ENCODE measurements at regions of chr15 and their contacts with region 1.

Region 1: DNA sequence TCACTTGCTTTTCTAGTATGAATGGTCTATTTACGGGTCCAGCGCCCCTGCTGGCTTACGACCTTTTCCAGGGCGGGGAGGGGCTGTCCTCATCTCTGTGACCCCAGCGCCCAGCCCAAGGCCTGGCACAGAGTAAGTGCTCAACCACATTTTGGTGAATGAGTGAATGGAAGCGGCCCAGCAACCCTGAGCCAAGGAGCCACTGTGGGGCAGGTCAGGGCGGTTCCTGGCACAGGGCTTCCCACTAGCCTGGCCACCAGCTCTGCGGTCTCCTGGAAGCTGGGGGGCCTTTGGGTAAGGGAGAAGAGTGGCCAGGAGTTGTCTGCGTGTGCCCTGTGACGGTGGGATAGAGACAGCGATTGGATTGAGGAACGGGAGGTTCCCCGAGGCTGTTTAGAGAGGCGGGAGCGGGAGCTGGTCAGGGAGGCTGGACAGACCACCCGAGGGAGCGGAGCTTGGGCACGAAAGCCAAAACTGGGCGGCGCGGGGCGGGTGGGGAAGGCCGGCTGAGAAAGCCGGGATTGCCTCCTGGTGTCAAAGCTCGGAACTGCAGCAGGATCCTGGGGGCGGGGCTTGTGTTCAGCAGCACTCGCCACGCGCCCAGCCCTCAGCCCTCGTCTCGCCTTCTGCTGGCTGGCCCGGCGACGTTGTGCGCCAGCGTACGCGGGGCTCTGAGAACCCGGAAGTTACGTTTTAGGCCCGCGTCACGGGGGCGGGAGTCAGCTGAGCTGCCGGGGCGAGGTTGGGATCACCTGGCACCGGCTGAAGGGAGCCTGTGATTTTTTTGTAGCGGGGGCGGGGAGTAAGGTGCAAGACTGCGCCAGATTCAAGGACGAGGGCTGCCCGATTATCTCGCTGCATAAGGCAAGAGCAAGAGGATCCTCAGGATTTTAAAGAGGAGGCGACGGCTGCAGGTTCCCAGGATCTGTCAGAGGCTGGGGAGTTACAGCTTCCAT is at the start of gene VPS18:
- DNase-seq: peak; percentile 99 to 100 (median 99)
- H3K4me3 ChIP-seq: peak within 1 kb of the TSS; percentile 65 to 100 (median 93)
- H3K27ac ChIP-seq: peak within 1 kb of the TSS; percentile 44 to 97 (median 89)
- H3K27me3 ChIP-seq: no peaks in the 10 kb centered on the region
- CTCF ChIP-seq: peak; percentile 89 to 100 (median 99)
- total RNA-seq, gene VPS18: 19.3 to 39.4 (median 29.9) TPM

Region 2: GRCh38 chr15:40513609-40514008 is 380.4 kb before region 1 on chr15:
- intact Hi-C with region 1: loop called in 1 of 2 experiments (anchors 2 kb)
- DNase-seq: no peak
- H3K4me3 ChIP-seq: no peak overlapping the region
- H3K27ac ChIP-seq: no peak overlapping the region
- H3K27me3 ChIP-seq: no peaks in the 10 kb centered on the region
- CTCF ChIP-seq: no peak

Region 3: DNA sequence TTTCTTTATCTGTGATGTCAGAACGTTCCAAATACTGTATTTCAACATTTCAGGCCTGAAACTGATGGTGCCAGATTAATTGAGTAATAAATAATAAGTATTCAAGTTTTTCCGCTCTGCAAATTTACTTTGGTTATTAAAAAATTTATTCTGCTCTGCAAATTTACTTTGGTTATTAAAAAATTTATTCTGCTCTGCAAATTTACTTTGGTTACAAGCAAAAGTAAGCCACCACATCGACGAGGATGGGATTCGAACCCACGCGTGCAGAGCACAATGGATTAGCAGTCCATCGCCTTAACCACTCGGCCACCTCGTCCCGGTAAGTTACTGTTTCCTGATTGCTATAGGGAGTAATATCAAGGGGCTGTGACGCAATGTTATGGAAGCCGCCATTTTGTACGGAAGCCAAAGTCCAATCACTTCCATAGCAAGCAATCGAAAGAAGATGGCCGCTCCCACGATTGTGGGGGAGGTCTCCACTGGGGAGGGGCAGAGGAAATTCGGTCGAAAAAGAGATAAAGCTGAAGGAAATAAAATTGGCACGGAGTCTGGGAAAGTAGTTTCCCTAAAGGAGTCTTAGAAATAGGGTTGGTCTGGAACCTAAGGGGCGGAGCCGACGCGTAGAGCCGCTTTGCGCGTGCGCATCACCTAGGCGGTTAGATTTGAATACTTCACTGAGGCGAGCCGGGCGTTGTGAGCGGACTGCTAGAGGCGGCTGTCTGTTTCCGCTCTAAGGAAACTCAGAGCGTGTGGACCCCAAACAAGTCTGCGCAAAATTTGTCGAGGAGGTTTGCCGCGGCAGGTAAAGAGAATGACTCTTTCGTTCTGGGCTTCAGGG is 300.2 kb before region 1 on chr15 and contains the start of gene KNL1:
- intact Hi-C with region 1: loop called in 1 of 2 experiments (anchors 2 kb)
- DNase-seq: peak; percentile 88 to 97 (median 92)
- H3K4me3 ChIP-seq: peak within 1 kb of the TSS; percentile 50 to 89 (median 72)
- H3K27ac ChIP-seq: peak within 1 kb of the TSS; percentile 70 to 99 (median 95)
- H3K27me3 ChIP-seq: peaks cover 0 to 15% (median 0%) of the 10 kb centered on the region in 45 donors
- CTCF ChIP-seq: peak in 24 of 56 donors; percentile 4 to 56 (median 24)
- total RNA-seq, gene KNL1: 0.04 to 2.4 (median 0.44) TPM in 108 of 120 experiments, not detected in the others

Region 4: GRCh38 chr15:40694688-40695468 is 199.1 kb before region 1 on chr15 and contains the start of gene RAD51:
- intact Hi-C with region 1: loop called (anchors 1 to 2 kb)
- DNase-seq: peak; percentile 77 to 94 (median 92)
- H3K4me3 ChIP-seq: peak within 1 kb of the TSS; percentile 63 to 99 (median 91)
- H3K27ac ChIP-seq: peak within 1 kb of the TSS; percentile 90 to 100 (median 99)
- H3K27me3 ChIP-seq: no peaks in the 10 kb centered on the region
- CTCF ChIP-seq: peak in 11 of 56 donors; percentile 8 to 31 (median 14)
- total RNA-seq, gene RAD51: 0.23 to 3.8 (median 0.87) TPM in 85 of 120 experiments, not detected in the others

Region 5: GRCh38 chr15:40731034-40731433 is 163.0 kb before region 1 on chr15:
- intact Hi-C with region 1: no loop called
- DNase-seq: no peak
- H3K4me3 ChIP-seq: no peak overlapping the region
- H3K27ac ChIP-seq: no peak overlapping the region
- H3K27me3 ChIP-seq: no peaks in the 10 kb centered on the region
- CTCF ChIP-seq: no peak

Region 6: DNA sequence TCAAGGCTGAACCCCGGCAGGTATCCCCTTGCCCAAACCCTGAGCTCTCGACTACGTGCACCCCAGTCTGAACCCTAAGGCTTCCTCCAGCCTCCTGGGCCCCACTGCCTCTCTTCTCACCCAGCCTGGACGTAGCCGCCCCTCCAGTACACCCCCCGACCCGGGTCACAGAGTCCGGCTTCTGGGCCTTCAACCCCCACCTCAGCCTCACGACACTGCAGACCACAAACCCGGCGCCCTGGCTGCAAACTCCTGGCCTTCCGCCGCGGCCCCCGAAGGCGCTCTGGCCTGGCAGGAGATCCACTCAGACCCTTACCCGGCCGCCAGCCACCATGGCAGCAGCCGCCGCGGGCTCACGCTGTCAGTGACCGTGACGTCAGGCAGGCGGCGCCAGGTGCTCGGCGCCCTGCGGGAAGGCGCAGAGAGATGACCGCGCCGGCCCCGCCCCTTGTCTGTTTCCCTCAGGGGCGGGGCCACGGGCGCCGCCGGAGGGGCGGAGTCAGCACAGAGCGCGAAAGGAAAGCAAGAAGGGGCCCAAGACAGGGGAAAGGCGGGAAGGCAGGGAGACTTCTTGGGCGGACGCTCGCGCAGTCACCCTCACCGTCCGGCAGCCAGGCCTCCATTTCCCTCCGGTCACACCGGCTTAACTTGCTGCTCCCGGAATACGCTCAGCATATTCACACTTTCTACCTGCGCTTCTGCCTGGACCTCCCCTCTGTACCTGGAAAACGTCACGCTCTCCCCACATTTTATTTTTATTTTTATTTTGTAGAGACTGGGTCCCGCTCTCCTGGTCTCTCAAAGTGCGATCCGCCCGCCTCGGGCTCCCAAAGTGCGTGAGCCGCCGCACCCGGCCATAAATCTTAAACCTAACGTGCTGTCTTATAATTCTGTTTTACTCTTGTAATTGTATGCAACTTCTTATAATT is 138.9 kb before region 1 on chr15 and contains the start of gene RMDN3:
- intact Hi-C with region 1: loop called in 1 of 2 experiments (anchors 2 kb)
- DNase-seq: peak; percentile 84 to 96 (median 90)
- H3K4me3 ChIP-seq: peak within 1 kb of the TSS; percentile 62 to 99 (median 92)
- H3K27ac ChIP-seq: peak within 1 kb of the TSS in 57 of 59 donors; percentile 19 to 94 (median 79)
- H3K27me3 ChIP-seq: no peaks in the 10 kb centered on the region
- CTCF ChIP-seq: peak in 53 of 56 donors; percentile 14 to 70 (median 47)
- total RNA-seq, gene RMDN3: 51.4 to 80.5 (median 65.4) TPM

Region 7: DNA sequence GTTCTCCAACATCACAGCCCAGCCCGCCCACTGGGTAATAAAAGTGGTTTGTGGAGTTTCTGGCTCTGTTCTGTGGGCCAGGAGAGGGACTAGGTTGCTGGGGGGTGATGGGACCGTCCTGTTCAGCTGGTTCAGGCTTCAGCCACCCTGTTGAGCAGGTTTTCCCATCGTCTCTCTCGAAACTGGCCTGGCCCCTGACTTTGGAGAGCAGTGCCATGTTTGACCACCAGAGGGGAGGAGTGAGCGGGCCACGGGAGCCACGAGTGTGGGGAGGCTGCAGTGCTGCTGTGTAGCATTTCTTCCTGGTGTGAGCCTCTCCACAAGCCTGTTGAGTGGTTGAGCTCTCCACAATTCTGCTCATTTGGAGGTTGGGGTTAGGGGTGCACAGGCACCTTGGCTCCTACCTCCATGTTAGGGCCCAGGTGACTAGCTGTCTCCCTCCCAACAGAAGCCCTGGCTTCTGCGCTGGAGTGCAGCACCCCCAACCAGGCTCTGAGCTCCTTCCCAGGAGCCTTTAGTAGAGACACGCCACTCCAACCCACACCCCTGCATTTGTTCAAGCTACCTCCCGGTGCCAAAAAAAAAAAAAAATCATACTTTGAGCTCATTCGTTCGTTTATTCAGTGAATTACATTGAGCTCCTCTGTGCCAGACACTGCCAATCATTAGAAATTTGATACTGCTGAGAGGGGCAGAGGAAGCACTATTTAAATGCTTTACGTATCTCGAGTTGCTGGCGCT is 36.2 kb before region 1 on chr15:
- intact Hi-C with region 1: loop called (anchors 1 to 2 kb)
- DNase-seq: peak; percentile 54 to 81 (median 63)
- H3K4me3 ChIP-seq: peak overlapping the region in 1 of 59 donors; percentile 8
- H3K27ac ChIP-seq: no peak overlapping the region
- H3K27me3 ChIP-seq: peaks cover 0 to 5% (median 0%) of the 10 kb centered on the region in 45 donors
- CTCF ChIP-seq: peak; percentile 58 to 97 (median 91)

Region 8: GRCh38 chr15:41230650-41231533 is 336.9 kb after region 1 on chr15 and contains the starts of genes CHP1 and EXD1:
- intact Hi-C with region 1: loop called in 1 of 2 experiments (anchors 5 kb)
- DNase-seq: peak; percentile 93 to 99 (median 98)
- H3K4me3 ChIP-seq: peak within 1 kb of the TSS; percentile 50 to 97 (median 86)
- H3K27ac ChIP-seq: peak within 1 kb of the TSS; percentile 35 to 95 (median 86)
- H3K27me3 ChIP-seq: no peaks in the 10 kb centered on the region
- CTCF ChIP-seq: peak; percentile 74 to 99 (median 93)
- total RNA-seq, gene CHP1: 57.8 to 139 (median 95.3) TPM
- total RNA-seq, gene EXD1: 0.16 to 1.6 (median 0.41) TPM in 73 of 120 experiments, not detected in the others

Measured in dorsolateral prefrontal cortex (tissue), 120 donors.